ENCODE measurements at regions of chr7 and their contacts with region 1.

Region 1: DNA sequence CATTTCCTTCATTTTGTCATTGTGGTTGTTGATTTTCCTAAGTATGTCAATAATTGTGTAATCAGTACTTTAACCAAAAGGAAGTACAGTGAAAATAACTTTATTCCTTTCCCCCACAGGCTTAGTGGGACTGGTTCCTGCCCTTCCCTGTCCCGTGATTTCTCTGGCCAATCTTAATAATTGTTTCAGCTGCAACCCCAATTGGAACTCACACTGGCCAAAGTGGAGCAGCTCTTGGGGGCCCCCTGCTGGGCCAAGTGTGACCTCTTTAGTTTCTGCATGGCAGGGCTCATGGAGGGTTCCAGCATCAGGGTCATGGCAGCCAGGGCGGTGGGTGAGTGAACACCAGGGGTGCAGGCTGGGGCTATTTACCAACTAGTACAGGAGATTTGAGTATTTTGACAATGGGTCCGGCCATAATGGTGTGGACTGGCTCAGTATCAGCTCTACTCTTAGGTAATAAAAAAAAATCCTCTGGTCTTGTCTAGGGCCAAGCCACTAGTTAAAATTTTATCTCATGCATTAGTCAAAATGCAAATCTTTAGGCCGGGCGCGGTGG is 31.7 kb downstream of the CYCS start:
- DNase-seq: peak; percentile 84
- H3K4me3 ChIP-seq: no peak overlapping the region
- H3K27ac ChIP-seq: no peak overlapping the region
- H3K4me1 ChIP-seq: peaks cover 12% of the 10 kb centered on the region
- H3K27me3 ChIP-seq: no peaks in the 10 kb centered on the region
- CTCF ChIP-seq: peak; percentile 82

Region 2: DNA sequence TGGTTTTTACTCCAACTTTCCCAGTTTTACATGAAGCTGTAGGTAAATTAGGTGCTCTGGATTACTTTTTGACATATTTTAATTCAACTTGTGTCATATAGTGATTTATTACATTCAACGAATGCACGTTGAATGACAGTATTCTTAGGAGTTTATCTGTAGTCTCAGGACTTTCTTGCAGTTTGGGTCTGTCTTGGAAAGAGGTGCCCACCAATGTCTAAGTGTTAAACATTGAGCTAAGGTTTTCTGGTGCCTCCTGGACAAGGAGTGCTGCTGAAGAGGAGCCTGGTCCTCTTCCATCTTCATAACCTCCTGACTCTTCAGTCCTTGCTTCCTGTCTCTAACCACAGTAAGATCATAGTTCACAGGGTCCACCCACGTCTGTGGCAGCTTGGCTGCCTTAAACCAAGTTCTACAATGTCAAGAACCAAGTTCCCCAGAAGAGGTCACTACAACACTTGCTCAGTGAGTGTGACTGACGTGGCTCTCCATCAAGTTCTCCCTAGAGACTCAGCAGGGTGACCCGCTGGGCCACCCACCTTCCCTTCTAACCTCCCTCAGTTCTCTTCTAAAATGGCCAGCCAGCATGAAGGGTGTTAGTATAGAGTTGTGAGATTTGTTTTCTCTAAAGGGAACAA is 803.2 kb before region 1 on chr7:
- CTCF ChIA-PET with region 1: no interaction called
- POLR2A ChIA-PET with region 1: no interaction called
- intact Hi-C with region 1: loop called (anchors 10 kb)
- DNase-seq: peak; percentile 78
- H3K4me3 ChIP-seq: no peak overlapping the region
- H3K27ac ChIP-seq: no peak overlapping the region
- H3K4me1 ChIP-seq: peaks cover 19% of the 10 kb centered on the region
- H3K27me3 ChIP-seq: no peaks in the 10 kb centered on the region
- CTCF ChIP-seq: peak; percentile 63

Region 3: GRCh38 chr7:24572997-24573625 is 520.2 kb before region 1 on chr7 and contains the start of gene PALS2:
- CTCF ChIA-PET with region 1: no interaction called
- POLR2A ChIA-PET with region 1: no interaction called
- intact Hi-C with region 1: loop called (anchors 5 kb)
- DNase-seq: peak; percentile 83
- H3K4me3 ChIP-seq: peak within 1 kb of the TSS; percentile 70
- H3K27ac ChIP-seq: peak within 1 kb of the TSS; percentile 71
- H3K4me1 ChIP-seq: peaks cover 27% of the 10 kb centered on the region
- H3K27me3 ChIP-seq: peaks cover 4% of the 10 kb centered on the region
- CTCF ChIP-seq: no peak
- total RNA-seq, gene PALS2: 65.3 and 68.4 TPM in 2 replicates

Region 4: GRCh38 chr7:24812310-24812945 is 280.9 kb before region 1 on chr7:
- CTCF ChIA-PET with region 1: interaction called, 19 read pairs
- POLR2A ChIA-PET with region 1: no interaction called
- intact Hi-C with region 1: loop called (anchors 2 kb)
- DNase-seq: peak; percentile 49
- H3K4me3 ChIP-seq: no peak overlapping the region
- H3K27ac ChIP-seq: no peak overlapping the region
- H3K4me1 ChIP-seq: peaks cover 15% of the 10 kb centered on the region
- H3K27me3 ChIP-seq: no peaks in the 10 kb centered on the region
- CTCF ChIP-seq: peak; percentile 93

Region 5: DNA sequence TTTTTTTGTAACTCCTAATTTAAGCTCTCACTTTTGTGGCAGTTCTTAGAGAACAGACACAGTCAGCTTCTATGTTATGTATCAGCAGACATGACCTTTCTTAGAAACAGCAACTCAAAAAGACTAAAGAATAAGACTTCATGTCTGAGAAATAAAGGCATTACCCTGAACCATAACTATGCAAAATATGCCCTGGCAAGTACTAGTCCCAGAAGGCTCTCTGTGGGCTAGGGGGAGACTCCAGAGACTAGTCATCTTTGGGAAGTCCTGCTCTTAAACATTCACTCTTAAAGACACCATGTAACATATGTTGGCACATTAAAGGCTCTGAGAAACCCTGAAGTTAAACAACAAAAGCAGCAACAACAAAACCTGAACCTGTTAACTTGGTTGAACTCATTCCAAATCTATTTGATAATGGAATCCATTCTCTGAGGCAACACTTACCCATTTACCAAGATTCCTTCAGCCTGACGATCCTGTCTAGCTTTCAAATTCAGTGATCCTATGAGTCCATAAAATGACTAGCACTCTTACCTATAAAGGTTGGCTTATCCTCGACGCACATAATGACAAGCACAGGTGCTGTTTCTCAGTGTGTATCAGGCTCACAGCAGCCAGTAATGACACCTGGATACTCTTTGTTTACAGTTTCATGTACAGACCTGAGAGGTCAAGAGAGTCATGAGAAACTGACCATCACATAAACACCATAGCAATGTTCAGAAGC is 175.7 kb before region 1 on chr7:
- CTCF ChIA-PET with region 1: no interaction called
- POLR2A ChIA-PET with region 1: no interaction called
- intact Hi-C with region 1: no loop called
- DNase-seq: no peak
- H3K4me3 ChIP-seq: no peak overlapping the region
- H3K27ac ChIP-seq: no peak overlapping the region
- H3K4me1 ChIP-seq: peaks cover 18% of the 10 kb centered on the region
- H3K27me3 ChIP-seq: no peaks in the 10 kb centered on the region
- CTCF ChIP-seq: no peak

Region 6: DNA sequence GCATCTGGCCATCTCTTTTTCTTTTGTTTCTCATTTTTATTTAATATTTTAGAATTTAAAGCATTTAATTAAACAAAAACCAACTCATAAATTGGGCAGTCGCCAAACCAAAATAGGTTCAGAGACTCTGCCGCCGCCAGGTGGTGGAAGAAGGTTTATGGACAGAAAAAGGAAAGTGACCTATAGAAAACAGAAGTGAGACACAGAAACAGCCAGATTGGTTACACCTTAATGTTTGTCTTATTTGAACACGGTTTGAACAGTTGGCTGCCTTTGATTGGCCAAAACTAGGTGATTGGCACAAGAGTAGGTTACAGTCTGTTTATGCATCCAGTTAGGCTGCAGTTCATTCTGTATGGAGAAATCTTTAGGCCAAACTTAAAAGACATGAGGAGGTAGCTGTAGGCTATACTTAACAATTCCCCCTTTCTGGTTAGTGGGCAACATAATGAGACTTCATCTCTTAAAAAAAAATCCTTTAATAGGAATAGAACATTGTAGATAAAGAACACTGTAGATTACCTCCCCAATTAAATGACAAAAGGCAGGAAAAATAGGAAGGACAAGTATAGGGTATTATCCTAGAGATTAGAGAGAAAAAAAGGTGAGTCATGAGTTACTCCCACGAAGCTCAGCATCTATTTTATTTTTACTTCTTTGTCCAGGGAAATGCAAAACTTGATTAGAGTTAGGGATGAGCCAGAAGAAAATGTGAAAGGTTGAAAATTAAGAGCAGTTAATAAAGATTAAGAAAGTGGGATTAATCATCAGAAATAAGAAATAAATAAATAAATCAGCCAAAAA is 55.6 kb after region 1 on chr7:
- CTCF ChIA-PET with region 1: no interaction called
- POLR2A ChIA-PET with region 1: no interaction called
- intact Hi-C with region 1: no loop called
- DNase-seq: no peak
- H3K4me3 ChIP-seq: no peak overlapping the region
- H3K27ac ChIP-seq: no peak overlapping the region
- H3K4me1 ChIP-seq: no peaks in the 10 kb centered on the region
- H3K27me3 ChIP-seq: no peaks in the 10 kb centered on the region
- CTCF ChIP-seq: no peak

Measured in A673 (cell line).